ENCODE measurements at regions of chr1 and their contacts with region 1.

Region 1: GRCh38 chr1:54810100-54810942 is 9.2 kb upstream of the TTC22 start:
- DNase-seq: peak in 1 of 2 experiments; percentile 92
- H3K4me3 ChIP-seq: no peak overlapping the region
- H3K27ac ChIP-seq: no peak overlapping the region
- H3K4me1 ChIP-seq: peaks cover 4 to 29% (median 18%) of the 10 kb centered on the region in 4 experiments
- H3K27me3 ChIP-seq: no peaks in the 10 kb centered on the region; a peak in 2 of 7 replicates
- CTCF ChIP-seq: peak; percentile 91 to 96 (median 91)
- EP300 ChIP-seq: no peak
- POLR2A ChIP-seq: no peak
- RAD21 ChIP-seq: peak; percentile 98

Region 2: DNA sequence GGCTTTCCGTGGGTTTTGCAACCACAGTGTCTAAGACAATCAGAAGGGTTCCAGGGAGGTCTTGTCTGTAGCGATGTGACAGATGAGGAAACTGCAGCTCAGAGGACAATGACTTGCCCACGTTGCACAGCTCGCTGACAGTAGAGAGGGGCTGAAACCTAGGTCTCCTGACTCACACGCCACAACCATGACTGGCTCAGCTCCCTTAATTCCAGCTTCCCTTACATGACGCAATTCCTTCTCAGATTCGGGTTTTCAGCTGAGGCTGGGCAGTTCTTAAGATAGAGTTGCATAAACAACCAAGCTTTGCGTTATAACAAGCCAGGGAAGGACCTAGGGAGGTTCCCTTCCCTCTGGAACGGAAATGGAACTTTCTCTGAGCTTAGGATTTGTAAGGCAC is 40.4 kb after region 1 on chr1:
- CTCF ChIA-PET with region 1: interaction called, 16 read pairs
- POLR2A ChIA-PET with region 1: interaction called, 3 read pairs
- DNase-seq: no peak
- H3K4me3 ChIP-seq: no peak overlapping the region
- H3K27ac ChIP-seq: no peak overlapping the region
- H3K4me1 ChIP-seq: no peaks in the 10 kb centered on the region
- H3K27me3 ChIP-seq: no peaks in the 10 kb centered on the region
- CTCF ChIP-seq: no peak
- EP300 ChIP-seq: no peak
- POLR2A ChIP-seq: no peak
- RAD21 ChIP-seq: no peak

Region 3: DNA sequence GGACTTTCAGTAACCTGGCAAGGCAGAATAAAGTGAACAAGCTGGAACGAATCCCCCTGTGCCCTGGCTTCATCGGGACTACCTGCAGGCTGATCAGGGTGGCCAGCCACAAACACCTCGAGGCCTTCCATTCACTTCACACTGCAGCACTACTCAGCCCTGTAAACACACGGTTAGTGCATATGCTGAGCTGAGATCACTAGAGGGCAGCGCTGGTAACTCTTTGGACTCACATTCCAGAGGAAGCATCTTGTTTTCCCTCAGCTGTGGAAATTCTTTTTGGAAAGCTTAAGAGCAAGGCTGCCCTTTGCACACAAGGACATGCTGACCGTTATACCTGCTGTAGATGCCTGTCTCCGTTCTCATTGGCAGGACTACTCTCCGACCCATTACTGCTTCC is 261.2 kb after region 1 on chr1:
- CTCF ChIA-PET with region 1: no interaction called
- POLR2A ChIA-PET with region 1: no interaction called
- DNase-seq: peak in 1 of 2 experiments; percentile 36
- H3K4me3 ChIP-seq: no peak overlapping the region
- H3K27ac ChIP-seq: no peak overlapping the region
- H3K4me1 ChIP-seq: no peaks in the 10 kb centered on the region
- H3K27me3 ChIP-seq: no peaks in the 10 kb centered on the region
- CTCF ChIP-seq: peak; percentile 31 to 83 (median 61)
- EP300 ChIP-seq: no peak
- POLR2A ChIP-seq: no peak
- RAD21 ChIP-seq: peak; percentile 48 to 66

Measured in H1 (cell line).